ENCODE measurements at regions of chrX and their contacts with region 1.

Region 1: GRCh38 chrX:76279000-76279399 is 106.1 kb downstream of the PBDC1 start:
- H3K4me3 Mint-ChIP-seq: no peak overlapping the region
- H3K27ac Mint-ChIP-seq: no peak overlapping the region
- H3K4me1 Mint-ChIP-seq: no peaks in the 10 kb centered on the region
- H3K27me3 Mint-ChIP-seq: no peaks in the 10 kb centered on the region

Region 2: GRCh38 chrX:76159453-76159852 is 119.5 kb before region 1 on chrX:
- intact Hi-C with region 1: no loop called
- H3K4me3 Mint-ChIP-seq: no peak overlapping the region
- H3K27ac Mint-ChIP-seq: no peak overlapping the region
- H3K4me1 Mint-ChIP-seq: no peaks in the 10 kb centered on the region
- H3K27me3 Mint-ChIP-seq: no peaks in the 10 kb centered on the region

Region 3: GRCh38 chrX:76454456-76454927 is 175.5 kb after region 1 on chrX:
- intact Hi-C with region 1: loop called (anchors 2 kb)
- H3K4me3 Mint-ChIP-seq: no peak overlapping the region
- H3K27ac Mint-ChIP-seq: no peak overlapping the region
- H3K4me1 Mint-ChIP-seq: no peaks in the 10 kb centered on the region
- H3K27me3 Mint-ChIP-seq: peaks cover 2% of the 10 kb centered on the region

Region 4: DNA sequence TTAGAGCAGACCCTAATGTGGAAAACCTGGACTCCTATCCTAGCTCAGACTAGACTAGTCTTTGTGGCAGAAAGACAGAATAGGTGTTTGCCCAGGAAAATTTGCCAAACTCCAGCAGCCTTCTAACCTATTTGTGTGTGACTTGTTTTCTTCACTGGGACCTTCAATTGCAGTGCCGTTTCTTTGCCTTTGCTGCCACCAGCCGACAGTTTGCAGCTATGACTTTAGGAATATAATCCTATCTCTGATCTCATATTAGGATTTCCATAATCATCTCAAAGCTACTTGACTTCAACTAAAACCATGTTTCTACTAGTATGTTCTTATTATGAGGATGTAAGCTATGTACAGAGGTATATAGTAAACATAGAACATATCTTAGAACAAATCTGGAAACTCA is 1750.7 kb after region 1 on chrX:
- intact Hi-C with region 1: loop called (anchors 10 kb)
- H3K4me3 Mint-ChIP-seq: no peak overlapping the region
- H3K27ac Mint-ChIP-seq: no peak overlapping the region
- H3K4me1 Mint-ChIP-seq: no peaks in the 10 kb centered on the region
- H3K27me3 Mint-ChIP-seq: no peaks in the 10 kb centered on the region

Measured in dendritic cell treated with granulocyte-macrophage colony-stimulating factor and Interleukin-4, amounts not matched to agents 40 ng/mL and 50 ng/mL, for 4 days (primary cell).